Activated CD4-positive, alpha-beta T cell treated with anti-CD3 and anti-CD28 coated beads for 36 hours (primary cell): ENCODE measurements at regions of chr1 and their contacts with region 1.

Region 1: GRCh38 chr1:169893494-169894362 is at the start of gene SCYL3:
- DNase-seq: peak; percentile 92
- ATAC-seq: peak; percentile 87
- H3K4me3 Mint-ChIP-seq: peak within 1 kb of the TSS; percentile 80
- H3K27ac Mint-ChIP-seq: peak within 1 kb of the TSS; percentile 99
- H3K4me1 Mint-ChIP-seq: peaks cover 44% of the 10 kb centered on the region
- H3K27me3 Mint-ChIP-seq: no peaks in the 10 kb centered on the region
- total RNA-seq, gene SCYL3: 11.0 to 12.0 TPM

Region 2: GRCh38 chr1:169485544-169486278 is 408.0 kb before region 1 on chr1 and contains the start of gene SLC19A2:
- CTCF ChIA-PET with region 1: no interaction called
- POLR2A ChIA-PET with region 1: no interaction called
- intact Hi-C with region 1: loop called (anchors 2 to 5 kb)
- DNase-seq: peak; percentile 96
- ATAC-seq: peak; percentile 99
- H3K4me3 Mint-ChIP-seq: peak within 1 kb of the TSS; percentile 93
- H3K27ac Mint-ChIP-seq: peak within 1 kb of the TSS; percentile 94
- H3K4me1 Mint-ChIP-seq: peaks cover 48% of the 10 kb centered on the region
- H3K27me3 Mint-ChIP-seq: peaks cover 1% of the 10 kb centered on the region
- total RNA-seq, gene SLC19A2: 4.0 to 4.4 TPM

Region 3: DNA sequence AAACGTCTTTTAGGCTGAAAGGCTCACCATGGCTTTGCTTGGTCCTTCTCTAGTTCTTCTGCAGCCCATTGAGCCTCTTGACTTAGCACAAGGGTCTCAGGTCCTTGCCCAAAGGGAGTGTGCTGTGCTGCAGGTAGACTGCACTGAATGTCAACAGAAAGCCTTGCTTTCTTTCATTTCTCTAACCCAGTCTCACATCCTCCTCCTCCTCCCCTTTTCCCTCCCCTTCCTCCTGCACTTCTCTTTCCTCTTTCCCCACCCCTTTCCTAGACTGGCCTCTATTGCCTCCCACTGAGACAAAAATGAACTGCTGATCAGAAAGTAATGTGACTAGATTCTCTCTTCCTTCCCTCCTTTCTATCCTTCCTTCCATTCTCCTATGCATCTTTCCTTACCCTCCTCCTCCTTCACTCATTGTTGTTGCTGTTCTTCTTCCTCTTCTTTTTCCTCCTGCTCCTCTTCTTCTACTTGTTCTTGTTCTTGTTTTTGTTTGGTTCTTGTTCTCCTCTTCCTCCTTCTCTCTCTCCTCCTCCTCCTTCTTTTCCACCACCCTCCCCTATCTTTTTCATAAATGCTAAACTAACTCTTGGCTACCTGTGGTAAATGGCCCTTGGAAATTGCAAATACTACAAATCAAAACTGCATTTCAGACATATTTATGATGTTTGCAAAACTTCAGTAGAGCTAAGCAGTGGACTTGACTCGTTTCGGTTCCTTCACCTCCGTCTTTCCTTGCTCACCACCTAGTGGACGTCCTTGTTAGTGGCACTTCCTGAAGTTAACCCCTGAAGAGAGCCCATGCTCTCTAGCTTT is 182.1 kb before region 1 on chr1 and contains the start of gene SELL:
- CTCF ChIA-PET with region 1: no interaction called
- POLR2A ChIA-PET with region 1: no interaction called
- intact Hi-C with region 1: loop called in 1 of 2 experiments (anchors 5 kb)
- DNase-seq: peak; percentile 86
- ATAC-seq: peak; percentile 77
- H3K4me3 Mint-ChIP-seq: peak within 1 kb of the TSS; percentile 83
- H3K27ac Mint-ChIP-seq: peak within 1 kb of the TSS; percentile 93
- H3K4me1 Mint-ChIP-seq: peaks cover 23% of the 10 kb centered on the region
- H3K27me3 Mint-ChIP-seq: peaks cover 4% of the 10 kb centered on the region
- total RNA-seq, gene SELL: 206 to 262 TPM

Region 4: GRCh38 chr1:170074250-170075157 is 180.8 kb after region 1 on chr1 and contains the start of gene KIFAP3:
- CTCF ChIA-PET with region 1: interaction called, 4 read pairs
- POLR2A ChIA-PET with region 1: interaction called, 6 read pairs
- intact Hi-C with region 1: loop called (anchors 1 kb)
- DNase-seq: peak; percentile 98
- ATAC-seq: peak; percentile 99
- H3K4me3 Mint-ChIP-seq: peak within 1 kb of the TSS; percentile 96
- H3K27ac Mint-ChIP-seq: peak within 1 kb of the TSS; percentile 87
- H3K4me1 Mint-ChIP-seq: peaks cover 43% of the 10 kb centered on the region
- H3K27me3 Mint-ChIP-seq: no peaks in the 10 kb centered on the region
- total RNA-seq, gene KIFAP3: 10.9 to 11.5 TPM

Region 5: GRCh38 chr1:171485375-171486047 is 1591.8 kb after region 1 on chr1 and contains the start of gene PRRC2C:
- CTCF ChIA-PET with region 1: no interaction called
- POLR2A ChIA-PET with region 1: no interaction called
- intact Hi-C with region 1: loop called in 1 of 2 experiments (anchors 1 kb)
- DNase-seq: peak; percentile 97
- ATAC-seq: peak; percentile 90
- H3K4me3 Mint-ChIP-seq: peak within 1 kb of the TSS; percentile 82
- H3K27ac Mint-ChIP-seq: peak within 1 kb of the TSS; percentile 95
- H3K4me1 Mint-ChIP-seq: peaks cover 43% of the 10 kb centered on the region
- H3K27me3 Mint-ChIP-seq: no peaks in the 10 kb centered on the region
- total RNA-seq, gene PRRC2C: 233 to 351 TPM

Region 6: DNA sequence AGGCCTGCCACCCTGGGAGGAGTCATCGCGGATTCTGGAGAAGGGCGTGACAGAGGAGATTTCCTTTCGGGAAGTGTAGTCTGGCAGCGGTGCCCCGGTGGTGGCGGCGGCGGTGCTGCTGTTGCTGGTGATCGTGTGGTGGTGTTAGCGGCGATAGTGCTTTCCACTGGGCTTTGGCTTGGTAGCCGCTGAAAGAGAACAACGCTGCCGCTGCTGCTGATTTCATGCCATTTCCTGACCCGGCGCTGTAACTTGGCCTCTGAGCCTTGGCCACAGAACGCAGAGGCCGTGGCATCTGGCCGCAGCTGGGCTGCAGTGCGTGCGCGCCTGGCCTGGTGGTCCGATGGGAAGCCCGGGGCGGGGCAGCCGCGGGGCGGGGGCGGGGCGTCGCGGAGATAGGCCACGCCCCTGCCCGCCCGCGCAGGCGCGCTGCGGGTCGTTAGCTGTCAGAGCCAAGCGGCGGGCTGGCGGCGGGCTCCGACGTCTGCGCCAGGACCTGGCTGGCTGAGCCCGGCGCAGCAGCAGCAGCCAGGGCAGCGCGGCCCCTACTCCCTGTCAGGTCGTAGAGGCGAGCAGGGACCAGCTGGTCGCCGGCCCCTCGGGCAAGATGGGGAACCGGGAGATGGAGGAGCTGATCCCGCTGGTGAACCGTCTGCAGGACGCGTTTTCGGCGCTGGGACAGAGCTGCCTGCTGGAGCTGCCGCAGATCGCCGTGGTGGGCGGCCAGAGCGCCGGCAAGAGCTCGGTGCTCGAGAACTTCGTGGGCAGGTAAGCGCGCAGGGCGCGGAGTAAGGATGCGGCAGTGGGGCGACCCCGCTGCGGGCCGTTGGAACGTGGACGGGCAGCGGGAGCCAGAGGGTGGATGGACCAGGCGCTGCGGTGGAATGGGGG is 1947.6 kb after region 1 on chr1 and contains the start of gene DNM3:
- CTCF ChIA-PET with region 1: no interaction called
- POLR2A ChIA-PET with region 1: no interaction called
- intact Hi-C with region 1: loop called in 1 of 2 experiments (anchors 5 kb)
- DNase-seq: peak; percentile 85
- ATAC-seq: peak; percentile 97
- H3K4me3 Mint-ChIP-seq: peak within 1 kb of the TSS; percentile 84
- H3K27ac Mint-ChIP-seq: peak within 1 kb of the TSS; percentile 77
- H3K4me1 Mint-ChIP-seq: peaks cover 14% of the 10 kb centered on the region
- H3K27me3 Mint-ChIP-seq: peaks cover 17% of the 10 kb centered on the region
- total RNA-seq, gene DNM3: 1.1 to 1.4 TPM